ENCODE measurements at regions of chr20 and their contacts with region 1.

Region 1: DNA sequence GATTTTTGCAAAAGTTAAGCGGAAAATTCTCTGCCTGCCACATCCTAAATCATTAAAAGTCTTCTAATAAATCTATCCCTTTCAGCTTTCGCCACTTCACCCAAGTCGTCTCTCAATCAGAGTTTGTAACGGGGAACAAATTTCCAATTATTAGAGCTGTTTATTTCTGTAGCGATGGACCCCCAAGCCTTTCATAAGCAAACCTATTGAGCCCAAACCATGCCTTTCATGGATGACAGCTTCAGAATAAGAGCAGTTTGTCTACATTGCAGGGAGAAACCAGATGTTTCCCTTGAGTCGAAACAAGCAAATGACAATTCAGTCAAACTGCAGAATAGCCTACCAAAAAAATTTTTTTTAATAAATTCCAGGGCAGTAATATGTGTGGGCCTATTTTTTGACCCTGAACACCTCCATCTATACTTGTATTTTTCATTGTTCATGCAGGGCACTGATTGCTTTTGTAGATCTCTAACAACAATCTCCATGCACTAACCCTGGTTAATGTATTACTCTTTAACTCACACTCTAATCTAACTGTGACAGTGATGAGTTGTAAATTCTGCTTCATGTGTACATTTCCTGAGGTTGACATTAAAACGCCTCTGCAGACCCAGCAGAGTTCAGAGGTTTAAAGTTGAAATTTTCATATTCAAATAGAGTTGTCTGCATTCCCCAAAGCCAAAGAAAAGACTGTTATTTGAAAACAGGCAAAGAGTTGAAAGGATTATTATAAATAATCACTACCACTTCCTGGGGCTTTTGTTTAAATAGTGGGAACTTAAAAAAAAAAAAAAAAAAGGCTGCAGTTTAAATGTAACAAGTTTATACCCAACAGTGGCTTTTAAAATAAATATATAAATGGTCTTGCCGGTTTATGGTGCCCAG is 64.5 kb downstream of the ATP9A start:
- DNase-seq: no peak
- H3K4me3 ChIP-seq: no peak overlapping the region
- H3K27ac ChIP-seq: no peak overlapping the region
- H3K4me1 ChIP-seq: no peaks in the 10 kb centered on the region
- H3K27me3 ChIP-seq: no peaks in the 10 kb centered on the region
- CTCF ChIP-seq: no peak
- POLR2A ChIP-seq: no peak

Region 2: DNA sequence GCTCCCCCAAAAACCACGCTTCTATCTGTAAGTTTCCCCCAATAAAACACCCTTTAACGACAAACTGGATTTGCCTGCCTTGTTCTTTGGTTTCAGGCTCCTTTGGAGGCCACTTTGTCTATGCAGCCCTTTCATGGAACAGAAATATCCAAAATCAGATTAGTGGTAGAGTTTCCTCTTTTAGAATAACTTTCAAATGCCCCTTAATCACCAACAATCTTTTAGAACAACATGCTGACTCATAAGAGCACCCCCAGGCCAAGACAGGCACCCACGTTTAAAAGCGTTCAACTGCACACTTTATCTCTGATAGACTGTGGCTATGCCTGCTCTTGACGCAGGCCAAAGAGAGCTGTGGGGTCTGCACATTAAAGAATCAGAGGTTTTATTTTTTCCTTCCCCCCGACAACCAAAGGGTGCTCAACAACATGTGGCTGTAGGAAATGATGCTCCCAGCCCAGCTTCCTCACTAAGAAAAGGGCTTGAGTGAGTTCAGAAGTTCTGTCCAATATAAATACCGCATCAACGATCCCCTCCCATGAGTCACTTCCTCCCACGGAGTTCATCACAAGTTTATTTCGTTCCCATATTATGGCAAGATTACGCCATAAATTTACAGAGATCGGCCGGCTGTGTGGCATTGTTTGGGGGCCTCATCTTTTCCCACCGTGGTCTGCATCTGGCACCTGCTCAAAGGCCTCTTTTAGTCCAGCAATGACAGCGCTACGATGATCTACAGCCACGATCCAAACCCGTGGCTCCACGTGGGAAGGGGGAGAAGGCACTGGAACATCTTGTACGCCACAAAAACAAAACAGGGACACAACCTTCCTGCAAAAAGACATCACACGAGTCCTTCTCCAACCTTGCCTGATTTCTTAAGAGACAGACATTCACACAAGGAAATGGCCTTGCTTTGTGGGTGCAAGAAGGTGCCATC is 72.4 kb before region 1 on chr20:
- intact Hi-C with region 1: no loop called
- DNase-seq: no peak
- H3K4me3 ChIP-seq: no peak overlapping the region
- H3K27ac ChIP-seq: peak overlapping the region in 7 of 8 donors; percentile 53 to 72 (median 66)
- H3K4me1 ChIP-seq: peaks cover 0 to 38% (median 13%) of the 10 kb centered on the region in 6 donors
- H3K27me3 ChIP-seq: peaks cover 0 to 29% (median 0%) of the 10 kb centered on the region in 7 donors
- CTCF ChIP-seq: no peak
- POLR2A ChIP-seq: no peak

Region 3: GRCh38 chr20:51930775-51931174 is 227.1 kb after region 1 on chr20:
- intact Hi-C with region 1: no loop called
- DNase-seq: no peak
- H3K4me3 ChIP-seq: no peak overlapping the region
- H3K27ac ChIP-seq: no peak overlapping the region
- H3K4me1 ChIP-seq: peaks cover 0 to 9% (median 0%) of the 10 kb centered on the region in 6 donors
- H3K27me3 ChIP-seq: no peaks in the 10 kb centered on the region
- CTCF ChIP-seq: no peak
- POLR2A ChIP-seq: no peak

Region 4: DNA sequence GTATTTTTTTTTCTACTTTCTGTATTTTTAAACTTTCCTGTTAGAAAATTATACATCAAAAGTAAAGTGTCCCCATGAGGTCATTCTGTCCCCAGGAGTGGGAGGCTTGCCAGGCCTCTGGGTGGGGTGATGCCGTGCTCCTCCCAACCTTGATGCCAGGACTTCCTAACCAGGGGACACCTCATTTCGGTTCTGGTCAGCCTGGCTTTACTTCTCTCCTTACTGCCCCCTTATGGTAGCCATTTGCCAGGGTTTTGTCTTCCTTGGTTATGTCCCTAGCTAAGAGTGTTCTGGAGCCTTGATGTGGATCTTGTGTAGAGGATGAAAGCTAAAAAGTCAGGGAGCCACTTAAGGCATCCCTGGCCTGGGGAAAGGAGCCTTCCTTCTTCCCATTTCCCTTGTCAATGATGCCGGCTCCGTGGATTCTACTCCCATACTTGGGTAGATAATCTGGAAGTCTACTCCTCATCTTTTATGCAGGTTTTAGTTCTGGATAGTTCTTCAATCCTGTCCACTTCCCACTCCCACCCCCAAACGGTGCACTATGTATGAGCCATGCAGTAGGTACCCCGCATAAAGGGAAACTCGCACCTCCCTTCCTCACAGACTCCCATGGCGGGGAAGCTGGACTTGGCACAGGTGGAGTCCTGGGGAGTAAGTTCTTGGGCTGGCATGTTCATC is 262.8 kb after region 1 on chr20:
- intact Hi-C with region 1: loop called (anchors 5 kb)
- DNase-seq: no peak
- H3K4me3 ChIP-seq: no peak overlapping the region
- H3K27ac ChIP-seq: no peak overlapping the region
- H3K4me1 ChIP-seq: no peaks in the 10 kb centered on the region
- H3K27me3 ChIP-seq: no peaks in the 10 kb centered on the region
- CTCF ChIP-seq: peak in 7 of 11 experiments; percentile 50 to 69 (median 54)
- POLR2A ChIP-seq: no peak

Measured in spleen (tissue), 13 donors.